PC-3 (cell line): ENCODE measurements at regions of chr22 and their contacts with region 1.

Region 1: GRCh38 chr22:40346178-40347118 is at the start of gene ADSL:
- DNase-seq: peak; percentile 76
- ATAC-seq: peak; percentile 93
- H3K4me3 ChIP-seq: peak within 1 kb of the TSS; percentile 92
- H3K27ac ChIP-seq: peak within 1 kb of the TSS; percentile 76
- H3K4me1 ChIP-seq: peaks cover 6% of the 10 kb centered on the region; the same call in 1 of the 2 replicates
- H3K27me3 ChIP-seq: no peaks in the 10 kb centered on the region
- CTCF ChIP-seq: no peak
- total RNA-seq, gene ADSL: 72.6 and 93.8 TPM in 2 replicates

Region 2: GRCh38 chr22:39253435-39254070 is 1092.9 kb before region 1 on chr22:
- CTCF ChIA-PET with region 1: no interaction called
- POLR2A ChIA-PET with region 1: interaction called, 11 read pairs
- intact Hi-C with region 1: no loop called
- DNase-seq: peak; percentile 82
- ATAC-seq: peak; percentile 68
- H3K4me3 ChIP-seq: peak overlapping the region; percentile 55
- H3K27ac ChIP-seq: peak overlapping the region; percentile 80
- H3K4me1 ChIP-seq: peaks cover 39% of the 10 kb centered on the region
- H3K27me3 ChIP-seq: no peaks in the 10 kb centered on the region
- CTCF ChIP-seq: no peak

Region 3: DNA sequence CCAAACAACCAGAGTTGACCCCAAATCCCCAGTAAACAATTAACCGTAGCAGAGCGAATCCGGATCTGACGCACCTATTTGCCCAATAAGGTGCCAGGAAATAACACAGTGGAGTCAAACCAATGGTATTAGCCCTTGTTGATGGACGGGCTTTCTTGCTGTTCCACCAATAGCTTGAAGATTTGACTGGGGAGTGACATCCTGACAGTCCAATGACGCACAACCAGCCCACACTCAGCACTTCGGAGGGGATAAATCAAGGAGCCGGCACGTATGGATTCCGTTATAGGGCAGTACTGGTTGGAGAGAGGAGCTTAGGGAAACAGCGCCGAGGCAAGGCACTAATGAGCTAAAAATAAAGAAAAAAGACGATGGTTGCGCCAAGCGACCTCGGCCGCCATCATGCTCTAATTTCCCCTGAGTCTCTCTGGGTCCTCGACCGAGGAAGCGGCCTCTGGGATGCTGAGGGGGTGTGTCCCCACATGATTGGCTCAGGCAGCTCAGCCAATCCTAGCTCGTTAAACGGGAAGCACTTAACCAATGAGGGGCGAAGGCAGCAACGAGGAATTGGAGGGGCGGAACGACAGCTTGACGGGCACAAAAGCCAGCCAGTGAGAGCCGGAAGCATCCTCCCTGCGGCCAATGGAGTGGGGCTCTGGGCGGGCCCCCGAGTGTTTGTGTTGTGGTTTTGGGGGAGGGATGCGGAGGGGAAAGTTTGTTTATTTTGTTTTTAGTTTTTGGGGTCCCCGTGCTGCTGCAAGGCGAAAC is 302.2 kb before region 1 on chr22:
- CTCF ChIA-PET with region 1: no interaction called
- POLR2A ChIA-PET with region 1: interaction called, 7 read pairs
- intact Hi-C with region 1: loop called (anchors 2 kb)
- DNase-seq: peak; percentile 96
- ATAC-seq: peak; percentile 85
- H3K4me3 ChIP-seq: peak overlapping the region; percentile 72
- H3K27ac ChIP-seq: peak overlapping the region; percentile 61
- H3K4me1 ChIP-seq: peaks cover 24% of the 10 kb centered on the region
- H3K27me3 ChIP-seq: no peaks in the 10 kb centered on the region
- CTCF ChIP-seq: no peak

Region 4: DNA sequence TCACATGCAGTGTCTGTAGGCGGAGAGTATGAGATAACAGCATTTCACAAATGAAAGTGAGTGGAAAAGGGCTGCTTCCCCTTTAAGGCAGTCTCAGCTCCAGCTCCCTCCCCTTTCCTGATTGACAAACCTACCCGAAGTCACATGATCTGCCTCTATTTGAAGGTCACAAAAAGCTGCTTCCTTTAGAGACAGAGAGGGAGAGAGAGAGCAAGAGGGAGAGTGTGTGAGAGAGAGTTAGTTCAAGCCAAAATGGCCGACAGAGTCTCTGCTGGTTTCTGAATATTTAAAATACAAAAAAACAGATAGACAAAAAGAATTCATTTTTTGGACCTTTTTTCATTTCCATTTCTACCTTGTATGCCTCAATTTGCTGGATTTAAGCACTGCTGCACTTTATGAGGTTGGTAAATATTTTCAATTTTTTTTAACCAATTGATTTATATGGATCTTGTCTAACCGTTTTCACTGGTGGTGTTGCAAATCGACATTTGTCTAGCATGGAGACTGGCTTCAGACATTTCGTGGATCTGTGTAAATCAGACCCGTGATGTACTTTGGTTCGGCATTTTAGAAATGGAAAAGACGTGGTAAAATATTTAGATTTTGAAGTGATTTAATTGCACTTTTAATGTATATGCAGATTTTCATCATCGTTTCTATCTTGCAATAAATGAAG is 168.6 kb before region 1 on chr22 and contains the start of gene TNRC6B:
- CTCF ChIA-PET with region 1: no interaction called
- POLR2A ChIA-PET with region 1: no interaction called
- intact Hi-C with region 1: loop called (anchors 5 kb)
- DNase-seq: peak; percentile 89
- ATAC-seq: peak; percentile 89
- H3K4me3 ChIP-seq: peak within 1 kb of the TSS; percentile 97
- H3K27ac ChIP-seq: peak within 1 kb of the TSS; percentile 87
- H3K4me1 ChIP-seq: peaks cover 37% of the 10 kb centered on the region
- H3K27me3 ChIP-seq: no peaks in the 10 kb centered on the region
- CTCF ChIP-seq: no peak
- total RNA-seq, gene TNRC6B: 15.1 and 21.3 TPM in 2 replicates

Region 5: DNA sequence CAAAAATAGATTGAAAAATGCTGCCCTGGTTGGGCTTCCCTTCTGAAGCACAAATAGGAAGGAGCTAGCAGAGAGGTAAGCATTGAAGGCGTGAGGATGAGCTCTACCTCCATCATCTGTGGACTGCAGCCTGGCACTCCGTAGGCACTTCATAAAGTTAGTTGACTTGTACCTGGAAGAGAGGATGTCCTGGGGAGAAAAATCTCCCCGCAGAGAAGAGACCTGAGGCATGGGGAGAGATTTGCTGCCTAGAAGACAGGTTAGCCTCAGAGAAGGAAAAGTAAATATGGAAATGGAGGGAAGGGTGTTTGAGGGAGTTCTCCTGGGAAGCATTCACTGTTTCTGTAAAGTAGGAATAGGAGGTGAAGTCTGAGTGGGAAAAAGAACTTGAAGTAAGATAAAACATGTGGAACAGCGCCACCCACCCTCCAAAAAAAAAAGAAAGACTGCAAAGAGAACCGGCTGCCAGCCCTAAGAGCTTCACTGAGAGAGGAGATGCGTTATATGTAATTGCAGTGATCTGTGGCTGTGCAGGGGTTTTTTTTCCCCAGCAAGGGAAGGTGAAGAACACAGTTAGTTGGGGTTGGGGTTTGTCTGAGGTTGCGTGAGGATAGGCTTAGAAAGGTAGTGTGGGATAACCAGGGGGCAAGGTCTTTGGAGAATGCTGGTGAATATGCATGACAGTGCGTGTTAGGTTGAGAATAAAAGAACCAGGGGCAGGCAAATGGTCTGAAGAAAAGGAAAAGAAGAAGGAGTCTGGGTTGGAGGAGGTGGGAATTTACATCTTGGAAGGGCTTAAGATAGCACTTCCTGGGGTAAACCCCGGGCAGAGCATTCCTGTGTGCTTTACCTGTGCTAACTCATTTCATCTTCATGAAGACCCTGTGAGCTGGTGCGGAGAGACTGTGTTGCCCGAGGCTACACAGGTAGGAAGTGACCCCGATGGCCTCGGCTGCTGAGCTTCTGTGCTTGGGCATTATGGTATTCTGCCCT is 152.7 kb before region 1 on chr22:
- CTCF ChIA-PET with region 1: no interaction called
- POLR2A ChIA-PET with region 1: no interaction called
- intact Hi-C with region 1: loop called (anchors 2 kb)
- DNase-seq: peak; percentile 31
- ATAC-seq: no peak
- H3K4me3 ChIP-seq: no peak overlapping the region
- H3K27ac ChIP-seq: no peak overlapping the region
- H3K4me1 ChIP-seq: peaks cover 33% of the 10 kb centered on the region
- H3K27me3 ChIP-seq: no peaks in the 10 kb centered on the region
- CTCF ChIP-seq: peak; percentile 62

Region 6: GRCh38 chr22:40238425-40239344 is 107.8 kb before region 1 on chr22:
- CTCF ChIA-PET with region 1: no interaction called
- POLR2A ChIA-PET with region 1: no interaction called
- intact Hi-C with region 1: loop called (anchors 5 kb)
- DNase-seq: peak; percentile 85
- ATAC-seq: peak; percentile 88
- H3K4me3 ChIP-seq: peak overlapping the region; percentile 35; the same call in 1 of the 2 replicates
- H3K27ac ChIP-seq: peak overlapping the region; percentile 94
- H3K4me1 ChIP-seq: peaks cover 44% of the 10 kb centered on the region
- H3K27me3 ChIP-seq: no peaks in the 10 kb centered on the region
- CTCF ChIP-seq: no peak

Region 7: GRCh38 chr22:40281717-40282116 is 64.7 kb before region 1 on chr22:
- CTCF ChIA-PET with region 1: no interaction called
- POLR2A ChIA-PET with region 1: no interaction called
- intact Hi-C with region 1: no loop called
- DNase-seq: no peak
- ATAC-seq: no peak
- H3K4me3 ChIP-seq: no peak overlapping the region
- H3K27ac ChIP-seq: no peak overlapping the region
- H3K4me1 ChIP-seq: peaks cover 23% of the 10 kb centered on the region
- H3K27me3 ChIP-seq: no peaks in the 10 kb centered on the region
- CTCF ChIP-seq: no peak